ENCODE measurements at regions of chr1 and their contacts with region 1.

Region 1: GRCh38 chr1:8348777-8349491 is 31.0 kb downstream of the SLC45A1 start:
- DNase-seq: peak; percentile 86
- ATAC-seq: peak; percentile 73
- H3K4me3 Mint-ChIP-seq: no peak overlapping the region
- H3K27ac Mint-ChIP-seq: no peak overlapping the region
- H3K4me1 Mint-ChIP-seq: peaks cover 26% of the 10 kb centered on the region
- H3K27me3 Mint-ChIP-seq: no peaks in the 10 kb centered on the region
- CTCF ChIP-seq: peak; percentile 80

Region 2: DNA sequence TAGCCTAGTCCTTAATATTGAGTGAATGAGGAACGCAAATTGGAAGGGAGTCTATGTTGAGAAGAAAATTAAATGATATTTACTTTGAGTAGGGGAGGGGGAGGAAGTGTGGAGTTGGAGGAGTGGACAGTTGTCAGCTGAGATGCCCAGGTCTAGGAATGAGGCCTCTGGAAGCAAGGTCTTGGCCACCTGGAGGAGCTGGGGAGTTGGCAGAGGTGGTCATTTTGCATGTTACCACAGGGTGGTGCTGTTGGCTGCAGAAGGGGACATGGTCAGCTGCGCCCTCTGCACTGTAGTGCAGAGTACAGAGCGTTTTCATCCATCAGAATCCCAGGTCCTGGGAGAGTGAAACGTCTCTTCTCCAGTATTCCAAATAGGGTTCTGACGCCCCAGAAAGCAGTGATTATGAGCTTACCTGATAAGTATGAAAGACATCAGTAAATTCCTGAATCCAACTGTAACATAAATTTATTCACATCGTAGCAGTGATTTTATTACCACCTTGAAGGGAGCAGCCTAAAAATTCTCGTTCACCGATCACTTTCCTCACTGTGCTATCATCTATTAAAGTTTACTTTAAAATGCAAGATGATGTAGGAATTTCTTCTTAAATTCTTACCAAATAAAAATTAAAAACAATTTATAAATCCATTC is 373.6 kb before region 1 on chr1:
- CTCF ChIA-PET with region 1: interaction called, 42 read pairs
- POLR2A ChIA-PET with region 1: no interaction called
- DNase-seq: peak; percentile 89
- ATAC-seq: peak; percentile 100
- H3K4me3 Mint-ChIP-seq: no peak overlapping the region
- H3K27ac Mint-ChIP-seq: no peak overlapping the region
- H3K4me1 Mint-ChIP-seq: 0 out of 2 replicates have a peak, but pooled peaks cover 2% of the 10 kb centered on the region
- H3K27me3 Mint-ChIP-seq: no peaks in the 10 kb centered on the region
- CTCF ChIP-seq: peak; percentile 88

Region 3: GRCh38 chr1:8329439-8329838 is 19.5 kb before region 1 on chr1:
- CTCF ChIA-PET with region 1: interaction called, 14 read pairs
- POLR2A ChIA-PET with region 1: no interaction called
- DNase-seq: no peak
- ATAC-seq: no peak
- H3K4me3 Mint-ChIP-seq: no peak overlapping the region
- H3K27ac Mint-ChIP-seq: no peak overlapping the region
- H3K4me1 Mint-ChIP-seq: no peaks in the 10 kb centered on the region
- H3K27me3 Mint-ChIP-seq: no peaks in the 10 kb centered on the region
- CTCF ChIP-seq: no peak

Region 4: DNA sequence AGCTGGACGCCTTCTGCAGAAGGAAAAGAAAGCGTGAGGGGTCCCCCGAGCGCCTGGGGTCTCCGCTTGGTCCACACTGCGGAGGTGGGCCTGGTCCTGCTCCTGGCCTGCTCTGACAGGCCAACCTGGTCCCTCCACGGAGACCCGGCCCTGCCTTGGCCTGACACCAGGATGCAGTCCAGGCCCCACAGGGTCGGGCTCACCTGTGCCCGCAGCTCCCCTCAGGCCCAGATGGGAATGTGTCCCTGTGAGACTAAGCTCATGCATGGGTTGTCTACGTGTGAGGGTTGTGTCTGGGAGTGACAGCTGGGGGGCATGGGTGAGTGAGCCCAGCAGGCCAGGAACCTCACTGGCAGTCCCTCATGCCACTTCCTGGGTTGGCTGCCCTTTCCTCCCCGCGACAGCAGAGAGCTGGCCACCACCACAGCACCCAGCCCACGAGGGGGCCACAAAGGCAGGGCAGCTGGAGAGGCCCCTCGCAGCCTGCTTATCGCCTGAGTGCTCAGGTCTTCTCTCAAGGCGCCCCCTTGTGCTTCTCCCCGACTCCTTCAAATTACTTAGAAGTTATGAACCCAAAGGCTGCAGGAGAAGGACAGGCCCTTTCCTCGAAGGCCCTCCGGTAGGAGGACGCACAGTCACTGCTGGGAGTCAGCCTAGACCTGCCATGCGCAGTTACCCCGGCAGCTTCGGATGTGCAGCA is 10.1 kb after region 1 on chr1:
- CTCF ChIA-PET with region 1: interaction called, 19 read pairs
- POLR2A ChIA-PET with region 1: no interaction called
- DNase-seq: no peak
- ATAC-seq: no peak
- H3K4me3 Mint-ChIP-seq: no peak overlapping the region
- H3K27ac Mint-ChIP-seq: no peak overlapping the region
- H3K4me1 Mint-ChIP-seq: no peaks in the 10 kb centered on the region
- H3K27me3 Mint-ChIP-seq: no peaks in the 10 kb centered on the region
- CTCF ChIP-seq: no peak

Region 5: GRCh38 chr1:8367571-8368184 is 18.7 kb after region 1 on chr1:
- CTCF ChIA-PET with region 1: interaction called, 11 read pairs
- POLR2A ChIA-PET with region 1: no interaction called
- DNase-seq: no peak
- ATAC-seq: no peak
- H3K4me3 Mint-ChIP-seq: no peak overlapping the region
- H3K27ac Mint-ChIP-seq: peak overlapping the region; percentile 87
- H3K4me1 Mint-ChIP-seq: peaks cover 58% of the 10 kb centered on the region
- H3K27me3 Mint-ChIP-seq: no peaks in the 10 kb centered on the region
- CTCF ChIP-seq: no peak

Measured in WTC11 (cell line).